Esophagus muscularis mucosa (tissue), 4 donors: ENCODE measurements at regions of chr11 and their contacts with region 1.

Region 1: GRCh38 chr11:73965076-73965860 is 14.4 kb downstream of the DNAJB13 start:
- DNase-seq: no peak
- H3K4me3 ChIP-seq: no peak overlapping the region
- H3K27ac ChIP-seq: no peak overlapping the region
- H3K4me1 ChIP-seq: peaks cover 3 to 15% (median 7%) of the 10 kb centered on the region in 4 donors
- H3K27me3 ChIP-seq: peaks cover 0 to 14% (median 0%) of the 10 kb centered on the region in 4 donors
- CTCF ChIP-seq: no peak
- EP300 ChIP-seq: no peak
- POLR2A ChIP-seq: no peak

Region 2: DNA sequence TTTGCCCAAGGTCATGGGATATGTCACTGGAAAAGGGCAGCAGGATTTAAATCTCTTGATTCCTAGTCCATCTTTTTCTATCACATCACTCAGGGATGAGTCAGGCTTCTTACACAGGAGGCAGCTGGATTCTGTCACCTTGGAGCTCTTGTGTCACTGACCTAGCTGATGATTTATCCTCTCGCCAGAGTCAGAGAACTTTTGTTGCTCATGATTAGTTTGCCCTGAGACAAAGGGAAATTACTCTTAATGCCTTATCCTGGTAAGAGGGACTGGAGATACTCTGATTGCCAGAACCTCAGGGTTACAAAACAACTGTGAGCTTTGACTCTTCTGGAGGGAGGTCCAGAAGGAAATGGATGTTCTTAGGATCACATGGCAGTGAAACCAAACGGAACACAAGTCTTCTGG is 98.7 kb before region 1 on chr11:
- intact Hi-C with region 1: no loop called
- DNase-seq: no peak
- H3K4me3 ChIP-seq: no peak overlapping the region
- H3K27ac ChIP-seq: peak overlapping the region; percentile 48 to 69 (median 53)
- H3K4me1 ChIP-seq: peaks cover 0 to 20% (median 17%) of the 10 kb centered on the region in 4 donors
- H3K27me3 ChIP-seq: no peaks in the 10 kb centered on the region
- CTCF ChIP-seq: no peak
- EP300 ChIP-seq: no peak
- POLR2A ChIP-seq: no peak

Region 3: DNA sequence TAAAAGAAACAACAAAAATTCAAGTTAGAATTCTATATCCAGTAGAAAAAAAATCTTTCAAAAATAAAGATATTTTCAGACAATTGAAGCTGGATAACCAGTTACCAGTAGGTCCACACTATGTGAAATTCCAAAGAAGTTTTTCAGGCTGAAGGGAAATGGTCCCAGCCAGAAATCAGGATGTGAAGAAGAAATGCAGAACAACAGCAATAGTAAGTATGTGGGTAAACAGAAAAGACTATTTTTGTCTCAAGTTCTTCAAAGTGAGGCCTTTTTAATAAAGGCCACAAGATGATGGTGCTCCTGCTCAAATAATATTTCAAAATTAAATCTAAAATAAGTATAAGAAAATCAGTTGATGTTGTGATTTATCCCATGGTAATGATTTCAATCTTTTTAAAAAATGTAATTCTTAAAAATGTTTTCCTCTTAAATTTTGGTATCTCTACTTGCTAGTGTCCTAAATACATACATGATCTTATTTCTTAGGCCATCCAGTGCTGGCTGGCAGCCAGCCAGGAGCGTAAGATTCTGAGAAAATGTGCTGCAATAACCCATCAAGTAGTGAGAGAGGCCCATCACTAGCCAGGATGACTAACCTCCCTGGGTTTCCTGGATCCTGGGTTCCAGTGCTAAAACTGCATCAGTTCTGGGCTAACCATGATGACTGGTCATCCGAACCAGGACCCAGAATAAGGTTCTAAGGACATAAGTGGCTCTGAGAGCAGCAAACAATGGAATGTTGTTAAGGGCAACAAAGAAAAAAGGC is 59.2 kb after region 1 on chr11:
- intact Hi-C with region 1: loop called (anchors 10 kb)
- DNase-seq: peak; percentile 93
- H3K4me3 ChIP-seq: no peak overlapping the region
- H3K27ac ChIP-seq: peak overlapping the region in 1 of 4 donors; percentile 4
- H3K4me1 ChIP-seq: peaks cover 6 to 20% (median 13%) of the 10 kb centered on the region in 4 donors
- H3K27me3 ChIP-seq: no peaks in the 10 kb centered on the region
- CTCF ChIP-seq: no peak
- EP300 ChIP-seq: no peak
- POLR2A ChIP-seq: no peak

Region 4: GRCh38 chr11:74069147-74070047 is 104.1 kb after region 1 on chr11:
- intact Hi-C with region 1: loop called (anchors 10 kb)
- DNase-seq: no peak
- H3K4me3 ChIP-seq: no peak overlapping the region
- H3K27ac ChIP-seq: no peak overlapping the region
- H3K4me1 ChIP-seq: peaks cover 0 to 8% (median 3%) of the 10 kb centered on the region in 4 donors
- H3K27me3 ChIP-seq: no peaks in the 10 kb centered on the region
- CTCF ChIP-seq: no peak
- EP300 ChIP-seq: no peak
- POLR2A ChIP-seq: no peak